ENCODE measurements at regions of chr11 and their contacts with region 1.

Region 1: GRCh38 chr11:126776119-126776518 is 224.5 kb downstream of the KIRREL3 start:
- DNase-seq: no peak
- H3K4me3 ChIP-seq: no peak overlapping the region
- CTCF ChIP-seq: no peak

Region 2: DNA sequence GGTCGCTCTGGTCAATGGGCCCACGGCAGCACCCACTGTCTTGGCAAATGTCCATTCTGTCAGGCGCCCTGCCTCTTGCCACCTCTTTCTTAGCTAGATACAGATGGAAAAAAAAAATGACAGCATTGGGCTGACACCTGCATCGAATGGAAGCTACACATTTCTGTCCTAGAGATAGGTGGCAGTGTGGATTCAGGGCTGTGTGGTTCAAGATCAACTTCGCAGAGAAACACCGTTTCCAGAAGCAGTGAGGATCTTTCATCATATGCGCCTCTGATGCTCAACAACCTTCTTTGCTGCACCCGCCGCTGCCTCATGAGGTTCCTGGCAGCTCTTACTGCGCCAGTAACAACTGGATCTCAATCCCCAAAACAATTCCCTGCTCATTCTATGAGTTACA is 11.9 kb before region 1 on chr11:
- CTCF ChIA-PET with region 1: interaction called, 12 read pairs
- POLR2A ChIA-PET with region 1: no interaction called
- DNase-seq: no peak
- H3K4me3 ChIP-seq: no peak overlapping the region
- CTCF ChIP-seq: no peak

Region 3: GRCh38 chr11:126790550-126791081 is 14.5 kb after region 1 on chr11:
- CTCF ChIA-PET with region 1: interaction called, 17 read pairs
- POLR2A ChIA-PET with region 1: no interaction called
- DNase-seq: peak; percentile 77
- H3K4me3 ChIP-seq: no peak overlapping the region
- CTCF ChIP-seq: peak; percentile 55